ENCODE measurements at regions of chr11 and their contacts with region 1.

Region 1: GRCh38 chr11:82945682-82946081 is 44.1 kb downstream of the DDIAS start:
- DNase-seq: no peak
- ATAC-seq: no peak
- H3K4me3 Mint-ChIP-seq: no peak overlapping the region
- H3K27ac Mint-ChIP-seq: peak overlapping the region in 1 of 10 donors; percentile 3
- H3K4me1 Mint-ChIP-seq: peaks cover 8 to 44% (median 15%) of the 10 kb centered on the region in 4 donors
- H3K27me3 Mint-ChIP-seq: no peaks in the 10 kb centered on the region

Region 2: DNA sequence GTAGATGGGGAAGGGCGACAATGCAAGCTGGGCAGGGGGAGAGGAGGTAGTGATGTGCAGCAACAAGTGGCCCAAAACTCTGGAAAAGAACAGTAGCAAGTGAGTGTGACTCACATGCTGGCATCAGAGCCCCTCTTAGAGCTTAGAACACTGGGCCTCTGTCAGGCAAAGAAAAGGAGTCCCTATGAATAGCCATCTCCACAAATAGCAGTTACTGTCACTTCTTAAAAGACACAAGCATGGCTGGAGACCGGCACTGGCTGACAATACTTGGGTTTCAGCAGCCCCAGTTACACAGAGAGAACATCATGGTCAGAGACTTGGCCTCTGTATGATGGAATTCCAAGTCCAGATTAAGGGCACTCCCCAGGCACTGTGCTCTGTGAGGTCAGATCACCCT is 103.7 kb before region 1 on chr11:
- POLR2A ChIA-PET with region 1: no interaction called
- DNase-seq: no peak
- ATAC-seq: no peak
- H3K4me3 Mint-ChIP-seq: no peak overlapping the region
- H3K27ac Mint-ChIP-seq: peak overlapping the region in 1 of 10 donors; percentile 18
- H3K4me1 Mint-ChIP-seq: peaks cover 0 to 1% (median 0%) of the 10 kb centered on the region in 4 donors
- H3K27me3 Mint-ChIP-seq: no peaks in the 10 kb centered on the region

Region 3: DNA sequence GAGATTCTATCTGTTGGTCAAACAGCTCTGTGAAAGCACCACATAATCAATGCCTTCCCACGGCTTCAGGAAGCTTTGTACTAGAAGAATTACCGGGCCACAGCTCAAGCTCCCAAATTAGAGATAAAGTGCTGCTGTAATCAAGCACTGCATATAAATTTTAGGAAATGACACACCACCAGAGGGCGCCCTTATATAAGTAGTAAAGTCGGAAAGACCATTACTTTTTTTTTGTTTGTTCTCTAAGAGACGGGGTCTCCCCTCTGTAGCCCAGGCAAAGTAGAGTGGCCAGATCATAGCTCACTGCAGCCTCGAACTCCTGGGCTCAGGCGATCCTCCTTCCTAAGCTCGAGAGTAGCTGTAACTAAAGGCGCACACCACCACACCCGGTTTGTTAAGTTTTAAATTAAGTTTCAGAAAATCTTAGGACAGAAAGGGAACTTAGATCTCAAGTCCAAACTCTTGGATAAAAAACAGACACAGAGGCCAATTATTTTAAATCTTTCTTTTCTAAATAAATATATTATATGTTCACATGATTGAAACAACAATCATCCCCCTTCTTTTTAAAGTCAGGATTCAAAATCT is 78.1 kb before region 1 on chr11:
- POLR2A ChIA-PET with region 1: no interaction called
- DNase-seq: peak; percentile 47 to 89 (median 76)
- ATAC-seq: peak; percentile 46 to 68
- H3K4me3 Mint-ChIP-seq: peak overlapping the region in 7 of 10 donors; percentile 43 to 77 (median 66)
- H3K27ac Mint-ChIP-seq: peak overlapping the region in 7 of 10 donors; percentile 44 to 81 (median 65)
- H3K4me1 Mint-ChIP-seq: peaks cover 8 to 13% (median 11%) of the 10 kb centered on the region in 4 donors
- H3K27me3 Mint-ChIP-seq: no peaks in the 10 kb centered on the region

Region 4: DNA sequence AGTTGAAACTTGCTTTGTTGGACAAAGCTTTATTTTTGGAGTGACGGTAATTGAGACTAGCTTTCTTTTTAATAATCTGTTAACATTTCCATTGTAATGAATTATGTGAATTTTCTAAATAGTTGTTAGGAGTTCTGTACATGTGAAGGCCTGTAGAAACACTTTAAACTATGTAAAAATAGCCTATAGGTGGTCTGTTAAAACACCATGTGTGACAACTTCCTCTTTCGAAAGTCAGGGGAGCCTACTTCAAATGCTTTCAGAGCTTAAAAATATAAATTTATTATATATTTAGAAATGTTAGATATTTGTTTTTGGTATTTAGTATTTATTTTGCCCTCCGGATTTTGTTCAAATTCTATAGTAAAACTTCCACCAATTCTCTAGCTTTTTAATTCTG is 15.5 kb before region 1 on chr11:
- POLR2A ChIA-PET with region 1: interaction called, 10 read pairs
- DNase-seq: no peak
- ATAC-seq: no peak
- H3K4me3 Mint-ChIP-seq: peak overlapping the region in 1 of 10 donors; percentile 14
- H3K27ac Mint-ChIP-seq: peak overlapping the region in 5 of 10 donors; percentile 57 to 82 (median 70)
- H3K4me1 Mint-ChIP-seq: peaks cover 14 to 59% (median 52%) of the 10 kb centered on the region in 4 donors
- H3K27me3 Mint-ChIP-seq: no peaks in the 10 kb centered on the region